ENCODE measurements at regions of chr20 and their contacts with region 1.

Region 1: DNA sequence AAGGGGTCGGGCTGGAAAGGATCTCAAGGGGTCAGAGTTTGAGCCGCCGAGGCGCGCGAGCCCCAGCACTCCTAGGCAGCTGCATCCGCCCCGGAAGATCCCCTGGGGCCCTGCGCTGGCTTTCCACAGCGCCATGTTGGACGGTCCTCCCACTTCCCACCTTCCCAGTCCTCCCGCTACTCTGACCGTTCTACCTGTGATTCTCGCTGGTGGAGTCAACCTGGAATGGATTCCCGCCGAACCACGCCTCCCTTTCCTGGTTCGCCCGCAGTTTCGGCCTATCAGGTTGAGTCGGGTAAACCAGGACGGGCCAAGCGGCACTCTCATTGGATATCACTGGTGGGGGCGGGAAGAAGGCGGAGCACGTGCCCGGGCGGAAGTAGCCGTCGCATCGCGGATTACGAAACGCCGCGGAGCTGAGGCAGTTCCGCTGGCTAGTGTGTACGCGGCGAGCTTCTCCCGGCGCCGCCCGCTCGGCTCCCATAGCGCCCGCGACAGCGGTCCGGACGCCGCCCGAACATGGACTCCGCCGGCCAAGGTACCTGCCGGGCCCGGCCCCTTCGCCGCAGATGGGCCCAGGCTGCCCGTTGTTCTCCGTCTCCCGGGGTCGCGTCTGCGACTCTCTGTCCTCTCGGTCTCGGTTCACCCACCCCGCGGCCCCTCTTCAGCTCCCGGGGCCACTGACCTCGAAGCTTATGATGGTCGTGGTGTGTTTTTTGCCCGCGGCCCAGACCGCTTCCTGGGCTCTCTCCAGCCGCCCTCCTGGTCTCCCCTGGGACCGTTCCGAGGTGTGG is at the start of gene TPD52L2:
- DNase-seq: peak; percentile 99
- H3K4me3 Mint-ChIP-seq: peak within 1 kb of the TSS; percentile 87
- H3K27ac Mint-ChIP-seq: peak within 1 kb of the TSS; percentile 100
- H3K4me1 Mint-ChIP-seq: peaks cover 25% of the 10 kb centered on the region
- H3K27me3 Mint-ChIP-seq: no peaks in the 10 kb centered on the region
- total RNA-seq, gene TPD52L2: 75.9 and 78.8 TPM in 2 replicates

Region 2: GRCh38 chr20:63785691-63786131 is 79.3 kb before region 1 on chr20:
- intact Hi-C with region 1: loop called (anchors 2 kb)
- DNase-seq: no peak
- H3K4me3 Mint-ChIP-seq: no peak overlapping the region
- H3K27ac Mint-ChIP-seq: no peak overlapping the region
- H3K4me1 Mint-ChIP-seq: peaks cover 14% of the 10 kb centered on the region
- H3K27me3 Mint-ChIP-seq: no peaks in the 10 kb centered on the region

Region 3: GRCh38 chr20:63941282-63942060 is 76.4 kb after region 1 on chr20:
- intact Hi-C with region 1: loop called (anchors 1 kb)
- DNase-seq: peak; percentile 95
- H3K4me3 Mint-ChIP-seq: peak overlapping the region; percentile 43
- H3K27ac Mint-ChIP-seq: peak overlapping the region; percentile 74
- H3K4me1 Mint-ChIP-seq: peaks cover 8% of the 10 kb centered on the region
- H3K27me3 Mint-ChIP-seq: no peaks in the 10 kb centered on the region

Measured in activated CD4-positive, alpha-beta T cell treated with anti-CD3 and anti-CD28 coated beads, Interleukin-2, amount 10 ng/mL, durations not matched to agents 24 days and 14 days (primary cell).